ENCODE measurements at regions of chr11 and their contacts with region 1.

Region 1: DNA sequence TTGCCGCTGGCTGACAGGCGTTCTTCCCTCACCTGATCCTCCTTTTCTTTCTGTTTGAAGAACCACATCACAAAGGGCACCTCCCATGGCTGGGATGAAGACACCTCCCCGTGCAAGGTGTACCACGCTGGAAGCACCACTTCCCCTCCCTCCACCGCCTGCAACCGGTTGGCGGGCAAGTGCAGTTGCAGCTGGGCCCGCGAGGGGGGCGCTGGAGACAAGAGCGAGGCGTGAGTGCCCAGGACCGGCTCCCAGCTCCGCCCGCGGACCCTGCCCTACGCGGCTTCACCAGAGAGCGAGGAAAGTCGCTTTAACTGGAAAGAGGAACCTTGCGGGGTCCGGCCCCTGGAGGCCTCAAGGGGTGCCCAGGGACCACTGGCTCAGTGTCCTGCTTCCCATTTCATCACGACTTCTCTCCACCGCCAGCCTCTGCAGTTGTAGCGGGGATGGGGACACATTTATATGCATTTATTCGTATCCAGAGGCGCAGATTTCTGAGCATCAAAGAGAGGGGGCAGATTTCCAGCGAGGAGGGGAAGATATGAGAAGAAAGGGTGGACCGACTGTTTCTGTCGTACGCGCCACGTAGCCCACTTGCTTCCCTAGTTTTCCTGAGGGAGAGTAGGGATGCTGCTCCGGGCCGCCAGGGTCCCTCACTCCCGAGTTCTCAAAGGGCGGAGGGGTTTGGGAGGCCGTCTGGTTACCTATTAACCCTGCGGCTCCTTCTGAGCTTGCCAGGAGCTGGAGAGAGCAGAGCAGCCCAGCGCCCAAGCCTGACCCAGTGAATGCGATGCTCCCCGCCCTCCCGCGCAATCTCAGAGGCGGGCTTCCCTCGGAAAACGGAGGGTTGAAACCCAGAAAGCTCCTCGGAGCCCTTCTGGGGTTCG is 3.5 kb downstream of the ESAM start:
- DNase-seq: peak in 34 of 35 experiments; percentile 42 to 76 (median 58)
- ATAC-seq: peak; percentile 63 to 69 (median 66)
- H3K4me3 ChIP-seq: peak overlapping the region; percentile 9 to 67
- H3K4me3 Mint-ChIP-seq: peak overlapping the region; percentile 64 to 74 (median 71)
- H3K27ac ChIP-seq: no peak overlapping the region
- H3K27ac Mint-ChIP-seq: peak overlapping the region in 1 of 2 donors; percentile 77
- H3K4me1 ChIP-seq: peaks cover 19 to 55% of the 10 kb centered on the region in 2 experiments
- H3K4me1 Mint-ChIP-seq: peaks cover 26 to 45% (median 27%) of the 10 kb centered on the region in 3 donors
- H3K27me3 ChIP-seq: peaks cover 0 to 82% of the 10 kb centered on the region in 2 experiments
- H3K27me3 Mint-ChIP-seq: peaks cover 29 to 57% of the 10 kb centered on the region in 2 donors

Region 2: GRCh38 chr11:124693142-124693541 is 65.4 kb before region 1 on chr11:
- CTCF ChIA-PET with region 1: no interaction called
- POLR2A ChIA-PET with region 1: no interaction called
- DNase-seq: no peak
- ATAC-seq: no peak
- H3K4me3 ChIP-seq: no peak overlapping the region
- H3K4me3 Mint-ChIP-seq: no peak overlapping the region
- H3K27ac ChIP-seq: no peak overlapping the region
- H3K27ac Mint-ChIP-seq: no peak overlapping the region
- H3K4me1 ChIP-seq: no peaks in the 10 kb centered on the region
- H3K4me1 Mint-ChIP-seq: no peaks in the 10 kb centered on the region
- H3K27me3 ChIP-seq: no peaks in the 10 kb centered on the region
- H3K27me3 Mint-ChIP-seq: peaks cover 0 to 2% of the 10 kb centered on the region in 2 donors

Region 3: GRCh38 chr11:124746621-124747243 is 11.8 kb before region 1 on chr11:
- CTCF ChIA-PET with region 1: interaction called, 9 to 30 read pairs
- POLR2A ChIA-PET with region 1: no interaction called
- DNase-seq: peak; percentile 57 to 86 (median 72)
- ATAC-seq: peak; percentile 88 to 91 (median 89)
- H3K4me3 ChIP-seq: peak overlapping the region; percentile 76 to 99
- H3K4me3 Mint-ChIP-seq: peak overlapping the region; percentile 93 to 97 (median 97)
- H3K27ac ChIP-seq: peak overlapping the region; percentile 70
- H3K27ac Mint-ChIP-seq: peak overlapping the region; percentile 91 to 98
- H3K4me1 ChIP-seq: peaks cover 2 to 23% of the 10 kb centered on the region in 2 experiments
- H3K4me1 Mint-ChIP-seq: peaks cover 13 to 29% (median 16%) of the 10 kb centered on the region in 3 donors
- H3K27me3 ChIP-seq: peaks cover 0 to 14% of the 10 kb centered on the region in 2 experiments
- H3K27me3 Mint-ChIP-seq: peaks cover 2 to 6% of the 10 kb centered on the region in 2 donors

Region 4: DNA sequence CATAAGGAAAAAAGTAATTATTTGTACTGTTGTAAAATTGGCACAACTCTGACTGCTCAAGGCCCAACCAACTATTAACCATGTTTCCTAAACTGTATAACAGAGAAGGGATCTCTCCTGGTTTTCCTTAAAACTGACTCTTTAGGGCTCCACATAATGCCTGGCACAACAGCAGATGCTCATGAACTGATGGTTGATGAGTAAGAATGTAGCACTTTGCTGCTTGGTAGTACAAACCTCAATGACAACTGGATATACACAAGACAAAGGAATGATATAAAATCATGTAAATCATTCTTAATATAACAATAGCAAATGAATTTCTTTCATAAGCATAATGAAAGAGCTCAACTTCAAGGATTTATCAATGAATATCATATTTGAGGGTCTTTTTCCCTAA is 30.0 kb after region 1 on chr11:
- CTCF ChIA-PET with region 1: interaction called, 11 to 17 read pairs
- POLR2A ChIA-PET with region 1: no interaction called
- DNase-seq: no peak
- ATAC-seq: no peak
- H3K4me3 ChIP-seq: no peak overlapping the region
- H3K4me3 Mint-ChIP-seq: no peak overlapping the region
- H3K27ac ChIP-seq: no peak overlapping the region
- H3K27ac Mint-ChIP-seq: no peak overlapping the region
- H3K4me1 ChIP-seq: peaks cover 0 to 2% of the 10 kb centered on the region in 2 experiments
- H3K4me1 Mint-ChIP-seq: peaks cover 27 to 45% (median 28%) of the 10 kb centered on the region in 3 donors
- H3K27me3 ChIP-seq: no peaks in the 10 kb centered on the region
- H3K27me3 Mint-ChIP-seq: no peaks in the 10 kb centered on the region

Region 5: DNA sequence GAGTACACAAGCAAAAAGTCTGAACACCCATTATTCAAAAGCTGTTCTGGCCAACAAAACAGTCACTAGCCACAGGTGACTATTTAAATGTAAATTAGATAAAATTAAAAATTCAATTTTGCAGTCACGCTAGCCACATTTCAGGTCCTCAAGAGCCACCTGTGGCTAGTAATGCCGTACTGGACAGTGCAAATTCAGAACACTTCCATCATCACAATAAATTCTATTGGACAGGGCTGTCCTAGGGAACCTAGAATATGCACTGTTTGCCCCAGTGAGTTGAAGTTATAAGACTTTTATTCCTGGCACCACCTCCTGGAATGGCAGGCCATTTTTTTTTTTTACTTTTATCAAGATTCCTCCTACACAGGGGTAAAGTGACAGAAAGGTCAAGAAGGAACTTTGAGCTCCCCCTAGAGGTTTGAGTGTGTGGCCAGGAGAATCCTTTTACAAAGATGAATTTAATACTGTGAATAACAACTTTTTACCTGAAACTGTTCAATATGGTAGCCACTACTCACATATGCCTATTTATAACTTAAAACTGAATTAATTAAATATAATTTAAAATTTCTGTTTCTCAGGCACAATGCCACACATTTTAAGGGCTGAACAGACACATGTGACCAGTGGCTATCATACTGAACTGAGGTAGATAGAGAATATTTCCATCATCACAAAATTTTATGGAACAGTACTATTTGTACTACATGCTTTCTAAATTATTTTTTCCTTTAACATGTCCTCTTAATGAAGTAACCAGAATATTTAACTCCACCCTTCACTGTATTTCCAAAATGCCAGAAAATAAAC is 35.1 kb after region 1 on chr11:
- CTCF ChIA-PET with region 1: interaction called, 3 to 17 read pairs
- POLR2A ChIA-PET with region 1: no interaction called
- DNase-seq: peak in 5 of 35 experiments; percentile 3 to 68 (median 13)
- ATAC-seq: peak in 3 of 4 experiments; percentile 52 to 64 (median 53)
- H3K4me3 ChIP-seq: no peak overlapping the region
- H3K4me3 Mint-ChIP-seq: no peak overlapping the region
- H3K27ac ChIP-seq: no peak overlapping the region
- H3K27ac Mint-ChIP-seq: no peak overlapping the region
- H3K4me1 ChIP-seq: peaks cover 0 to 5% of the 10 kb centered on the region in 2 experiments
- H3K4me1 Mint-ChIP-seq: peaks cover 42 to 50% (median 44%) of the 10 kb centered on the region in 3 donors
- H3K27me3 ChIP-seq: no peaks in the 10 kb centered on the region
- H3K27me3 Mint-ChIP-seq: no peaks in the 10 kb centered on the region

Region 6: DNA sequence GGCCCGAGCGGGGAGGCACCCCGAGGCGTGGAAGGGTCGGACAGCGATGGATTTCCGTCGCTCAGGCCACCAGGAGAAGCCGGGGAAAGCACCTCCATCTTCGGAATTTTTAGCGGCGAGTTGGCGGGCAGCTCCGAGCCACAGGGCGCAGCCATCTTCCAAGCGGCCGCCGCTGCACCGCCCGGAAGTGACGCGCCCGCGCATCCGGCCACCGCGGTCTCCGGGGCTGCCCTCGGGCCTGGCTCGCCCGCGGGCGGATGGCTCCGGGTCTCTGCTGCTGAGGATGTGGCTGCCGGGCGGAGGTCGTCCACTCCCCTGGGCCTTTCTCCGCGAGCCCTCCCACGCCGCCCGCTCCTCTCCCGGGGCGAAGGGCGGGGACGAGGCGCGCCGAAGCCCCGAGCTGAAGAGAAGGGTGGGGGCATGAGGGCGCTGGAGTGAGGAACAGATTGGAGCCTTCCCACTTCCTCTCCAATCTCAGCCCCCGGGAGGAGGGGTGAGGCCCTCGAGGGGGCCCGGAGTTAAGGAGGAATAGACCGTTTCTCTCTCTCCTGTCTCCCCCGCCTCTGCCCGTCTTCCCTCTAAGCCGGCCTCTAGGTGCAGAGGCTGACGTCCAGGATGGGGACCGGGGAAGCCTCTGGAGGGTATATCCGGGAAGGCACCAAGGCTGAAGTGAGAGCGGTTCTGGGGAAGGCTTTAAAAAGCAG is 41.8 kb after region 1 on chr11 and contains the start of gene MSANTD2:
- CTCF ChIA-PET with region 1: interaction called, 3 to 10 read pairs
- POLR2A ChIA-PET with region 1: no interaction called
- DNase-seq: peak; percentile 38 to 85 (median 67)
- ATAC-seq: peak; percentile 89 to 92 (median 90)
- H3K4me3 ChIP-seq: peak within 1 kb of the TSS; percentile 52 to 94
- H3K4me3 Mint-ChIP-seq: peak within 1 kb of the TSS; percentile 87 to 94 (median 93)
- H3K27ac ChIP-seq: peak within 1 kb of the TSS; percentile 98
- H3K27ac Mint-ChIP-seq: peak within 1 kb of the TSS; percentile 91 to 92
- H3K4me1 ChIP-seq: peaks cover 11% of the 10 kb centered on the region in 2 experiments
- H3K4me1 Mint-ChIP-seq: peaks cover 18 to 32% (median 31%) of the 10 kb centered on the region in 3 donors
- H3K27me3 ChIP-seq: no peaks in the 10 kb centered on the region
- H3K27me3 Mint-ChIP-seq: no peaks in the 10 kb centered on the region
- total RNA-seq, gene MSANTD2: 10.1 to 25.2 (median 19.9) TPM

Region 7: DNA sequence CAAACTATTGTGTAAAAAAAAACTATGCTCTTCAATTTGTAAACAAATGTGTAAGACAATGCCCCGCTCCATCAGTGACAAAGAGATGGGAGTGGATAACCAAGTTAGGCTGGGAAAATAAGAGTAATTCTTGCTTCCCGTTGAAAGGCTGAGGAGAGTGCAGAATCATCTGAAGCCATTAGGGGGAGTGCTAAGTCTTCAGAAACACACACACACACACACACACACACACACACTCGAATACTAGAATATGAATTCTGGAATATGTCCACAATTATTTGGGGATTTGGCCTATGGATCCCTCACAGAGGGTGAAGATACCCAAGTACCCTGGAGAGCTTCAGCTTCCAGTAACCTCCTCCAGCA is 78.9 kb after region 1 on chr11:
- CTCF ChIA-PET with region 1: interaction called, 5 to 11 read pairs
- POLR2A ChIA-PET with region 1: interaction called in 1 of 2 experiments, 3 read pairs
- DNase-seq: peak in 1 of 35 experiments; percentile 32
- ATAC-seq: peak in 1 of 4 experiments; percentile 47
- H3K4me3 ChIP-seq: no peak overlapping the region
- H3K4me3 Mint-ChIP-seq: peak overlapping the region in 1 of 3 donors; percentile 78
- H3K27ac ChIP-seq: no peak overlapping the region
- H3K27ac Mint-ChIP-seq: no peak overlapping the region
- H3K4me1 ChIP-seq: peaks cover 2 to 17% of the 10 kb centered on the region in 2 experiments
- H3K4me1 Mint-ChIP-seq: peaks cover 19 to 23% (median 21%) of the 10 kb centered on the region in 3 donors
- H3K27me3 ChIP-seq: peaks cover 23 to 44% of the 10 kb centered on the region in 2 experiments
- H3K27me3 Mint-ChIP-seq: peaks cover 49 to 71% of the 10 kb centered on the region in 2 donors